Activated T-helper 1 cell treated with anti-CD3 and anti-CD28 coated beads, Interleukin-12 subunit alpha, Interleukin-12 subunit beta, Interleukin-2, Interleukin-4 antibody, amounts not matched to agents 30 ng/mL and 10 ng/mL and 1 ng/mL, durations not matched to agents 14 hours and 24 hours and 36 hours (primary cell): ENCODE measurements at regions of chr7 and their contacts with region 1.

Region 1: DNA sequence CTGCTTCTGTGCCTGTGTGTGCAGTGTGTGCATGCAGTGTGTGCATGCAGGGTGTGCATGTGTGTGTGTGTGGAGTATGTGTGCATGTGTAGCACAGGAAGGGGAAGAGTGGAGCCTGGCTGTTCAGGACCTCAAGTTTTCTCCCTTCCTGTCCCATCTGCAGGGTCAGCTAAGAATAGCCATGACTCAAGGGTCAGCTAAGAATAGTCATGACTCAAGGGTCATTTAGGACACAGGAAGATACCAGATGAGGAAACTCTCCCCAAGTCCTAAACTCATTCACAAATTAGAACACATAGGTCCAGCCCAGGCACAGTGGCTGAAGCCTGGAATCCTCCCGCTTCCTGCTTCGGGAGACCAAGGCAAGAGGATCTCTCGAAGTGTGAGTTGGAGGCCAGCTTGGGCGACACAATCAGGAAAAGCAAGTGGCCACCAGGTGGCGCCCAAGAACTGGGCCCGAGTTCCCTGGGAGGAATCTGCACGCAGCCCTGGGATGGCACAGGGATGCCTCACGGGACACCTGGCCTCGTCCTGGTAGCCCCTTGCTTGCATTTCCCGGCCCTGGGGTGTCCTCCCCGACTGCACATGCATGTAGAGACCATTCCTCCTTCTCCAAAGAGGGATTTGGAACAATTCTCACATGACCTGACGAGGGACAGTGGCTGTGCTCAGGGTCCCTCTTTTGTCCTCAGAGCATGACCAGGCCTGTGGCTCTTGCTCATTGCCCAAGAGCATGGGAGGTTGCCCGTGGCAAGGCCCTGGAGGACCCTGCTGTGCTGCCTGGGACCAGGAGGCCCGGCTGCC is 21.4 kb upstream of the VOPP1 start:
- DNase-seq: peak; percentile 48
- H3K4me3 Mint-ChIP-seq: no peak overlapping the region
- H3K27ac Mint-ChIP-seq: no peak overlapping the region
- H3K4me1 Mint-ChIP-seq: peaks cover 32% of the 10 kb centered on the region
- H3K27me3 Mint-ChIP-seq: peaks cover 4% of the 10 kb centered on the region

Region 2: GRCh38 chr7:55280031-55280454 is 313.7 kb before region 1 on chr7:
- intact Hi-C with region 1: loop called (anchors 5 kb)
- DNase-seq: peak; percentile 29
- H3K4me3 Mint-ChIP-seq: no peak overlapping the region
- H3K27ac Mint-ChIP-seq: no peak overlapping the region
- H3K4me1 Mint-ChIP-seq: peaks cover 5% of the 10 kb centered on the region
- H3K27me3 Mint-ChIP-seq: peaks cover 5% of the 10 kb centered on the region

Region 3: GRCh38 chr7:55464422-55464821 is 129.3 kb before region 1 on chr7:
- intact Hi-C with region 1: no loop called
- DNase-seq: no peak
- H3K4me3 Mint-ChIP-seq: no peak overlapping the region
- H3K27ac Mint-ChIP-seq: no peak overlapping the region
- H3K4me1 Mint-ChIP-seq: peaks cover 47% of the 10 kb centered on the region
- H3K27me3 Mint-ChIP-seq: no peaks in the 10 kb centered on the region

Region 4: DNA sequence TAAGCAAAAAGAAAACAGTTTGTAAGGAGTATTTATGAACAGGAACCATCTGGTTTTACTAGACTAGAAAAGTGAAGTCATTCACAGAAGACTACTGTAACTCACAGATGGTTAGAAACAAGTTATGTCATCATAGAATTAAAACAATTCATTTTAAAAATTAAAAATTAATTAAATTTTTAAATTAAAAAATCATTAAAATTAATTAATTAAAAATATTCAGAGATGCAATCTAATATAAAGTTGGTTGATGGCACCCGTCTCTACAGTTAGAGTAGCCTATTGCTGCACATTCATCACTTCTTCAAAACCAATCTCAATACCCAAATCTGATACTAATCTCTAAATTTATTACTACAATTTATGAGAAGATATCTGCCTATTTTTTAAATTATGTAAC is 977.3 kb after region 1 on chr7:
- intact Hi-C with region 1: no loop called
- DNase-seq: no peak
- H3K4me3 Mint-ChIP-seq: no peak overlapping the region
- H3K27ac Mint-ChIP-seq: no peak overlapping the region
- H3K4me1 Mint-ChIP-seq: no peaks in the 10 kb centered on the region
- H3K27me3 Mint-ChIP-seq: no peaks in the 10 kb centered on the region